IMR-90 (cell line): ENCODE measurements at regions of chr9 and their contacts with region 1.

Region 1: GRCh38 chr9:85676790-85677189 is 65.0 kb downstream of the AGTPBP1 start:
- DNase-seq: no peak
- ATAC-seq: no peak
- H3K4me3 ChIP-seq: no peak overlapping the region
- H3K27ac ChIP-seq: no peak overlapping the region
- H3K4me1 ChIP-seq: no peaks in the 10 kb centered on the region
- H3K27me3 ChIP-seq: no peaks in the 10 kb centered on the region
- CTCF ChIP-seq: no peak
- POLR2A ChIP-seq: no peak
- RAD21 ChIP-seq: no peak

Region 2: GRCh38 chr9:85339338-85339737 is 337.5 kb before region 1 on chr9:
- CTCF ChIA-PET with region 1: no interaction called
- POLR2A ChIA-PET with region 1: no interaction called
- dilution Hi-C with region 1: no loop called
- in situ Hi-C with region 1: no loop called
- intact Hi-C with region 1: no loop called
- DNase-seq: no peak
- ATAC-seq: no peak
- H3K4me3 ChIP-seq: no peak overlapping the region
- H3K27ac ChIP-seq: no peak overlapping the region
- H3K4me1 ChIP-seq: no peaks in the 10 kb centered on the region
- H3K27me3 ChIP-seq: no peaks in the 10 kb centered on the region
- CTCF ChIP-seq: no peak
- POLR2A ChIP-seq: no peak
- RAD21 ChIP-seq: no peak

Region 3: DNA sequence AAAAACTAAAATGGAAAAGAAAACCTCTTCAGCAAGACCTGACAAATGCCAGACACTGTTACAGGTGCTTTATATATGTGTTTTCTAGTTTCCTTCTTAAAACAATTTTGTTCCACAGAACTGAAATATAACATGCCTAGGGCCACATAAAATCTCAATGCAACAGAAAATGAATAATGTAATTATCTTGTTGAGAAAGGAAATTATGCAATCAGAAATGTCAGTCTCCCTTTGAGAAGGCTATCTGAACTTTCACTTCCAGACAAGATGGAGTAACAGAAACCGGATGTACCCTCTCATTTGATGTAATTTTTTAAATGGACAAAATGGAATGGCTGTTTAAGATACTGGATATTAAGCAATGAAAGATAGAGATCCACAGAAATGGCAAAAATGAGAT is 14.2 kb before region 1 on chr9:
- CTCF ChIA-PET with region 1: no interaction called
- POLR2A ChIA-PET with region 1: interaction called, 24 read pairs
- dilution Hi-C with region 1: no loop called
- in situ Hi-C with region 1: no loop called
- intact Hi-C with region 1: no loop called
- DNase-seq: no peak
- ATAC-seq: no peak
- H3K4me3 ChIP-seq: no peak overlapping the region
- H3K27ac ChIP-seq: no peak overlapping the region
- H3K4me1 ChIP-seq: no peaks in the 10 kb centered on the region
- H3K27me3 ChIP-seq: no peaks in the 10 kb centered on the region
- CTCF ChIP-seq: no peak
- POLR2A ChIP-seq: no peak
- RAD21 ChIP-seq: no peak

Region 4: GRCh38 chr9:85723215-85723614 is 46.4 kb after region 1 on chr9:
- CTCF ChIA-PET with region 1: no interaction called
- POLR2A ChIA-PET with region 1: no interaction called
- dilution Hi-C with region 1: no loop called
- in situ Hi-C with region 1: no loop called
- intact Hi-C with region 1: no loop called
- DNase-seq: no peak
- ATAC-seq: no peak
- H3K4me3 ChIP-seq: no peak overlapping the region
- H3K27ac ChIP-seq: no peak overlapping the region
- H3K4me1 ChIP-seq: no peaks in the 10 kb centered on the region
- H3K27me3 ChIP-seq: no peaks in the 10 kb centered on the region
- CTCF ChIP-seq: no peak
- POLR2A ChIP-seq: no peak
- RAD21 ChIP-seq: no peak

Region 5: GRCh38 chr9:85931495-85931894 is 254.7 kb after region 1 on chr9:
- CTCF ChIA-PET with region 1: no interaction called
- POLR2A ChIA-PET with region 1: no interaction called
- dilution Hi-C with region 1: no loop called
- in situ Hi-C with region 1: no loop called
- intact Hi-C with region 1: no loop called
- DNase-seq: no peak
- ATAC-seq: no peak
- H3K4me3 ChIP-seq: no peak overlapping the region
- H3K27ac ChIP-seq: no peak overlapping the region
- H3K4me1 ChIP-seq: no peaks in the 10 kb centered on the region
- H3K27me3 ChIP-seq: no peaks in the 10 kb centered on the region; the same call in 1 of the 2 replicates
- CTCF ChIP-seq: no peak
- POLR2A ChIP-seq: no peak
- RAD21 ChIP-seq: no peak